Dendritic cell treated with granulocyte-macrophage colony-stimulating factor and Interleukin-4, amounts not matched to agents 40 ng/mL and 50 ng/mL, for 4 days (primary cell): ENCODE measurements at regions of chr3 and their contacts with region 1.

Region 1: DNA sequence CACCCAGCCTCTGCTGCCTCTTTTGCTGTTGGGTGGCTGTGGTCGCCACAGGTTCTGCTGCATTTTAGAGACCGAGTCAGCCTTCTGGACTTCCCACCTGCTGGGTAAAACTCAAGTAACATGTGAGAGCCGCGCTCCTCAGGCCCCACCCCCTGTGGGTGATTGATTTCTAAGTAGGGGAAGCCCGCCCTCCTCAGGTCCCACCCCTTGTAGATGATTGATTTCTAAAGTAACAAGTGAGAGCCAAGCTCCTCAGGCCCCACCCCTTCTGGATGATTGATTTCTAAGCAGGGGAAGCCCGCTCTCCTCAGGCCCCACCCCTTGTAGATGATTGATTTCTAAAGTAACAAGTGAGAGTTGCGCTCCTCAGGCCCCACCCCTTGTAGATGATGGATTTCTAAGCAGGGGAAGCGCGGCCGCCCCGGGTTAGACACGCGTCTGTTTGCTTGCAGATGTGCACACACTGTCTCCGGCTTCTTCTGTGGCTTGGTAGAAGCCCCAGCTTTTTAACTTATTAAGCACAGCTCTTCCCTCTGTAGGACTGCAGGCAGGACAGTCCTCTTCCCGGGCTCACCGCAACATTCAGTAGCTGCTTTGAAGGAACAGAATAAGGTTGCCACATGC is 83.4 kb downstream of the FAM43A start:
- H3K4me3 Mint-ChIP-seq: peak overlapping the region; percentile 71
- H3K27ac Mint-ChIP-seq: peak overlapping the region; percentile 54
- H3K4me1 Mint-ChIP-seq: peaks cover 57% of the 10 kb centered on the region
- H3K27me3 Mint-ChIP-seq: peaks cover 16% of the 10 kb centered on the region

Region 2: DNA sequence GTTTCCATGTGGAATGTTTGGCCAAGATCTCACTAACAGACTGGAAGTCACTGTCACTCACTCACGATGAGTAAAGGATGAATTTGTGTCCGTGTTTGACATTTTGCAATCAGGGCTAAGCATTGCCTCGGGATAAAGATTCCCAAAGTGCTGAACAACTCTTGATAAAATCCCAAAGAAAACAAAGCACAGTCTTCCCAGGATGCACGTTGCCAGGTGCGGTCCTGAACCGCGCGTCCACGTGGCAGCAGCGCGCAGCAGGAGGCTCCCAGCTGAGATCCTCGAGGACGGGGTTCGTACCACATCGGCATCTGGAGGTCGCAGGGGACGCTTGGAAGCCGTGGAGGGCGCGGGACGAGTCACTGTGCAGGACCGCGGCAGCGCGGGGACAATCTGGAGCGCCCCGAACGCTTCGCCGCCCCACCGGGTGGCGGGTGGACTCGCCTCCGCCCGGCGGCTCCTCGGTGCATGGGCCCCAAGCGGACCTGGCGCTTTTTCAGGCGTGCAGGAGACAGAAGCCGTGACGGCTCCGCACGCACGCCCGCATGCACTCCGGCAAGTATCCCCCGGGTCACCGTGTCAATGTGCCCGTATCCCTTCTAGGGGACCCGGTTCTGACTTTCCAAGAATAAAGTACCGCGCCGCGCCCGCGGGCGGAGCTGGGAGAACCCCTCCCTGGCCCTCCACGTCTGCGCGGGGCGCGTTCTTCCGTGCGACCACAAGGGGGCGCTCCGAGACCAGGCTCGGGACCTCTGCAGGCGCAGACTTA is 435.7 kb before region 1 on chr3:
- intact Hi-C with region 1: no loop called
- H3K4me3 Mint-ChIP-seq: peak overlapping the region; percentile 76
- H3K27ac Mint-ChIP-seq: no peak overlapping the region
- H3K4me1 Mint-ChIP-seq: peaks cover 20% of the 10 kb centered on the region
- H3K27me3 Mint-ChIP-seq: peaks cover 60% of the 10 kb centered on the region

Region 3: GRCh38 chr3:194782698-194783404 is 13.7 kb after region 1 on chr3:
- intact Hi-C with region 1: loop called (anchors 2 kb)
- H3K4me3 Mint-ChIP-seq: peak overlapping the region; percentile 6
- H3K27ac Mint-ChIP-seq: peak overlapping the region; percentile 89
- H3K4me1 Mint-ChIP-seq: peaks cover 64% of the 10 kb centered on the region
- H3K27me3 Mint-ChIP-seq: peaks cover 1% of the 10 kb centered on the region

Region 4: DNA sequence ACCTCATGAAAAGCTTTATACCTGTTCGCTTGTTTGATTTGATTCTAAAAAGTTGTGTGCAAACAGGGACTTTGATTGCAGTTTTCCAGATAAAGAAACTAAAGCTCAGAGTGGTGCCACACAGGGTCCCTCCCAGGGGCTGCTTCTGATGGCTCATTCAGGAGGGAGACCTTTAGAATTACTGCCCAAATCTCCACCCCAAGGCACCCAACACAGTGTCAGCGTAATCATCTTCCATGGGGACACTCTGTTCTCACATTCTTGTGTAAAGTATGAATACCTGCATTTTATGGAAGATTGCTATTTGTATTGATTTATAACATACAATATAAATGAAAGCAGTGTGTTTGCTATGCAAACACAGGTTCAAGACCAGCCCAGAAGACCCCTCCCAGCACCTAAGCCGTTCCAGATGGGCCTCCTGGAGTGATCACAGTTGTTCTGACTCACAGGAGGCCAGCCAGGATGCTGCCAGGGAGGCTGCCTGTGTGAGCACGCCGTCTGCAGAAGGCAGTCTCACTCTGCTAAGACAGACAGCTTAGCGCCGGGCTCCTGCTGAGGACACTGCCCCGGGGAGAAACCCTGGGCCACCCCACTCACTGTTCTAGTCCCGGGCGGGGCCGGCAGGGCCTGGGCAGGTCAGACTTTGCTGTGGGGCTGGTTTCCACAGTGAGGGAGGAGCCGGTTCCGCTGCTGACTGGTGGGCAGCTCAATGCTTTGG is 102.2 kb after region 1 on chr3:
- intact Hi-C with region 1: no loop called
- H3K4me3 Mint-ChIP-seq: peak overlapping the region; percentile 47
- H3K27ac Mint-ChIP-seq: peak overlapping the region; percentile 92
- H3K4me1 Mint-ChIP-seq: peaks cover 62% of the 10 kb centered on the region
- H3K27me3 Mint-ChIP-seq: peaks cover 6% of the 10 kb centered on the region